ENCODE measurements at regions of chr17 and their contacts with region 1.

Region 1: GRCh38 chr17:13002766-13003451 is 14.9 kb downstream of the ELAC2 start:
- DNase-seq: no peak
- ATAC-seq: peak; percentile 90
- H3K4me3 ChIP-seq: no peak overlapping the region
- H3K27ac ChIP-seq: no peak overlapping the region
- H3K4me1 ChIP-seq: no peaks in the 10 kb centered on the region
- H3K27me3 ChIP-seq: no peaks in the 10 kb centered on the region
- CTCF ChIP-seq: peak; percentile 72 to 84 (median 80)
- EP300 ChIP-seq: no peak
- POLR2A ChIP-seq: no peak
- RAD21 ChIP-seq: peak; percentile 90

Region 2: GRCh38 chr17:12180644-12181261 is 822.2 kb before region 1 on chr17:
- CTCF ChIA-PET with region 1: interaction called, 11 read pairs
- POLR2A ChIA-PET with region 1: no interaction called
- RAD21 ChIA-PET with region 1: no interaction called
- SMC1A ChIA-PET with region 1: no interaction called
- in situ Hi-C with region 1: no loop called
- intact Hi-C with region 1: loop called (anchors 1 kb)
- DNase-seq: peak; percentile 0
- ATAC-seq: peak; percentile 68
- H3K4me3 ChIP-seq: no peak overlapping the region
- H3K27ac ChIP-seq: no peak overlapping the region
- H3K4me1 ChIP-seq: no peaks in the 10 kb centered on the region
- H3K27me3 ChIP-seq: no peaks in the 10 kb centered on the region
- CTCF ChIP-seq: peak; percentile 58 to 81 (median 74); a peak in 5 of 6 replicates
- EP300 ChIP-seq: no peak
- POLR2A ChIP-seq: no peak
- RAD21 ChIP-seq: peak; percentile 88

Region 3: DNA sequence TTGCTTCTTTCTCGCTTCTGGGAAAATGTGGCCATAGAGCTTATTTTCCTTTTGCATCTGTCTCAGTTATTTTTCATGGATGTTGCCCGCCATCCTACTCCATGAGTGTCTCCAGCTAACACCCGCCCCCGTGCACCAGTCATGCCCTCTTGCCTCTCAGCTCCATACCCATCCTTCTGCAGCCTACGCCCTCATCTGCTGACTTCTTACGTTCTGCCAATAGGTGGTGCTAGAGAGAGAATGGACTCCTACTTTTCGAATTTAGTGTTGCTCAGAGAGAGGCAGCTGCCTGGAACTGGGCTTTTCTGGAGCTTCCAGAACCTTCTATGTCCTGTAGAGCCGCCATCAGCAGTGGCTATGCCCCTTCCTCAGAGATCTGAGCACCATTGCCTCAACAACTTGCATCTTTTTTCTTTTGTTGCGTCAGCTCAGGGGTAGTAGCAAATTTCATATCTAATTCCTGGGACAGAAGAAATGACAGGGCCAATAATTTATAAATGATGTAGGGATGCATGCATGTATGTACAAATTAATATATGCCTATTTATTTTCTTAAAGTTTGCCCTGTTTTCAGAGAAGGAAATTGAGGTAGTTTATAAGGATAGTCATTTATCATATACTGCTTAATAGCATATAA is 456.9 kb before region 1 on chr17:
- CTCF ChIA-PET with region 1: interaction called, 7 read pairs
- POLR2A ChIA-PET with region 1: no interaction called
- RAD21 ChIA-PET with region 1: no interaction called
- SMC1A ChIA-PET with region 1: interaction called, 3 read pairs
- in situ Hi-C with region 1: no loop called
- intact Hi-C with region 1: loop called (anchors 10 kb)
- DNase-seq: no peak
- ATAC-seq: peak; percentile 84
- H3K4me3 ChIP-seq: no peak overlapping the region
- H3K27ac ChIP-seq: no peak overlapping the region
- H3K4me1 ChIP-seq: no peaks in the 10 kb centered on the region
- H3K27me3 ChIP-seq: no peaks in the 10 kb centered on the region
- CTCF ChIP-seq: peak; percentile 63 to 71 (median 70)
- EP300 ChIP-seq: no peak
- POLR2A ChIP-seq: no peak
- RAD21 ChIP-seq: peak; percentile 62

Region 4: DNA sequence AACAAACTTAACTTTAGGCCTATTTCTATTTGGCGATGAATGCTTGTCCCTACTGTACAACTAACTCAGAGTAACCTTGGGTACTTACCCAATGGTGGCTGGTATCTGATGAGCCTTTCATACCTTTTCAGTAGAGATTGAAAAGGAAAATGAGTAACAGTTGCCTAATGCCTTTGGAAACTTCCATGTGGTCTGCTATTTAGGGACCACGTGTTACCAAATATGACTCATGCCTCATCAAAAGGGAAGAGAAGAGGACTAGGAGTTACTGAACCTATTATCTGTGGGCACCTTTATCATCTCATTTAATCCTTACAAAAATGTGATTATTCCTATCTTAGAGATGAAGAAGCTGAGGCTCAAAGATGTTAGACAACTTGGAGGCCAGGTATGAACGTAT is 329.1 kb before region 1 on chr17:
- CTCF ChIA-PET with region 1: no interaction called
- POLR2A ChIA-PET with region 1: no interaction called
- RAD21 ChIA-PET with region 1: no interaction called
- SMC1A ChIA-PET with region 1: no interaction called
- in situ Hi-C with region 1: no loop called
- intact Hi-C with region 1: loop called (anchors 10 kb)
- DNase-seq: no peak
- ATAC-seq: no peak
- H3K4me3 ChIP-seq: no peak overlapping the region
- H3K27ac ChIP-seq: no peak overlapping the region
- H3K4me1 ChIP-seq: no peaks in the 10 kb centered on the region
- H3K27me3 ChIP-seq: no peaks in the 10 kb centered on the region
- CTCF ChIP-seq: no peak
- EP300 ChIP-seq: no peak
- POLR2A ChIP-seq: no peak
- RAD21 ChIP-seq: no peak

Region 5: GRCh38 chr17:13055131-13055530 is 52.2 kb after region 1 on chr17:
- CTCF ChIA-PET with region 1: no interaction called
- POLR2A ChIA-PET with region 1: no interaction called
- RAD21 ChIA-PET with region 1: no interaction called
- SMC1A ChIA-PET with region 1: no interaction called
- in situ Hi-C with region 1: no loop called
- intact Hi-C with region 1: no loop called
- DNase-seq: no peak
- ATAC-seq: no peak
- H3K4me3 ChIP-seq: no peak overlapping the region
- H3K27ac ChIP-seq: no peak overlapping the region
- H3K4me1 ChIP-seq: no peaks in the 10 kb centered on the region
- H3K27me3 ChIP-seq: no peaks in the 10 kb centered on the region
- CTCF ChIP-seq: no peak
- EP300 ChIP-seq: no peak
- POLR2A ChIP-seq: no peak
- RAD21 ChIP-seq: no peak